Cardiac septum (tissue), 1 donor: ENCODE measurements at regions of chr3 and their contacts with region 1.

Region 1: DNA sequence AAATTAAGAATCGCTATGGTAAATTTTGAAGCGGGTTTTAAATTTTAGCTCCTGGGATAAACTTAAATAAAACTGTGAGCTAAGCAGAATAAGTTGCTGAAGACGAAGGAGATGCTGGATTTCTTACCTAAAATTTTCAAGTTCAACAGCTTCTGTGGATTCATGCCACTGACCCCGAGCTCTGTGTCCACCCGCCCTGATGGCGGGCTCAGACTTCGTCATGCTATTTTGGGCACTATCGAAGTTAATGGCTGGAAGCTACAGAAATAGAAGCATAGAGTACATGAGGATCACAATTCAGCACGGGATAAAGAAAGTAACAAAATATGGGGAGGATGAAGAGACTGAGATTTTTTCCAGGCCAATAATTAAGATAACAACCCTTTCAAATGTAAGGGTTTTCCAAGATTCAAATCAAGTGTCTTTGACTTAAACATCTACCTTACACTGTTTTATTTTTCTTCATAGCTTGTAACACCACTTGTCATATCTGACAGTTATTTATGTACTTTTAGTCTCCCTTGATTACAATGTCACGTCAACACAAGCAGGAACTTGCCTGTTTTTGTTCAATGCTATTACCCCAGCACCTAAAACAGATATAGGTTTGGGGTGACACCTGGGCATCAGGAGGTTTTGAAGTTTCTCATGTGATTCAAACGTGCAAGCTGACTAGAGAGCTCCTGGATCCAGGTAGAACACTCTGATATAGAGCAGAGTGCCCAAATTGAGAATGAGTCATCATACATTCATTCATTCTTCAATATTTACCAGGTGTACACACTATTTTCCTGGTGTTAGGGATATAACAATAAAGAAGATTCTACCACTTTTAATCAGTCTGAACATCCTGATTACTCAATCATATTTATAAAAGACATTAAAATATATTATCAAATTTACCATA is 23.0 kb downstream of the NEK10 start:
- DNase-seq: no peak

Region 2: GRCh38 chr3:27326629-27327545 is 19.3 kb before region 1 on chr3:
- intact Hi-C with region 1: loop called (anchors 2 kb)
- DNase-seq: no peak

Region 3: GRCh38 chr3:27607370-27607769 is 261.2 kb after region 1 on chr3:
- intact Hi-C with region 1: no loop called
- DNase-seq: no peak